Endothelial cell of umbilical vein (primary cell): ENCODE measurements at regions of chr10 and their contacts with region 1.

Region 1: GRCh38 chr10:29304264-29305030 is 15.6 kb downstream of the LYZL1 start:
- DNase-seq: peak; percentile 79
- H3K4me3 ChIP-seq: no peak overlapping the region
- H3K27ac ChIP-seq: no peak overlapping the region
- H3K4me1 ChIP-seq: no peaks in the 10 kb centered on the region
- H3K27me3 ChIP-seq: peaks cover 1 to 16% of the 10 kb centered on the region in 2 experiments
- CTCF ChIP-seq: peak; percentile 64 to 79
- POLR2A ChIP-seq: no peak

Region 2: GRCh38 chr10:28628184-28628893 is 676.1 kb before region 1 on chr10:
- CTCF ChIA-PET with region 1: interaction called, 130 read pairs
- POLR2A ChIA-PET with region 1: no interaction called
- dilution Hi-C with region 1: no loop called
- intact Hi-C with region 1: loop called (anchors 1 kb)
- DNase-seq: peak; percentile 69
- H3K4me3 ChIP-seq: no peak overlapping the region
- H3K27ac ChIP-seq: no peak overlapping the region
- H3K4me1 ChIP-seq: no peaks in the 10 kb centered on the region
- H3K27me3 ChIP-seq: peaks cover 7 to 10% of the 10 kb centered on the region in 2 experiments
- CTCF ChIP-seq: peak; percentile 89 to 91
- POLR2A ChIP-seq: no peak

Region 3: GRCh38 chr10:28991326-28992270 is 312.8 kb before region 1 on chr10:
- CTCF ChIA-PET with region 1: interaction called, 24 read pairs
- POLR2A ChIA-PET with region 1: no interaction called
- dilution Hi-C with region 1: no loop called
- intact Hi-C with region 1: loop called (anchors 5 kb)
- DNase-seq: peak; percentile 51
- H3K4me3 ChIP-seq: no peak overlapping the region
- H3K27ac ChIP-seq: no peak overlapping the region
- H3K4me1 ChIP-seq: no peaks in the 10 kb centered on the region
- H3K27me3 ChIP-seq: peaks cover 0 to 4% of the 10 kb centered on the region in 2 experiments
- CTCF ChIP-seq: peak; percentile 70 to 80
- POLR2A ChIP-seq: no peak

Region 4: DNA sequence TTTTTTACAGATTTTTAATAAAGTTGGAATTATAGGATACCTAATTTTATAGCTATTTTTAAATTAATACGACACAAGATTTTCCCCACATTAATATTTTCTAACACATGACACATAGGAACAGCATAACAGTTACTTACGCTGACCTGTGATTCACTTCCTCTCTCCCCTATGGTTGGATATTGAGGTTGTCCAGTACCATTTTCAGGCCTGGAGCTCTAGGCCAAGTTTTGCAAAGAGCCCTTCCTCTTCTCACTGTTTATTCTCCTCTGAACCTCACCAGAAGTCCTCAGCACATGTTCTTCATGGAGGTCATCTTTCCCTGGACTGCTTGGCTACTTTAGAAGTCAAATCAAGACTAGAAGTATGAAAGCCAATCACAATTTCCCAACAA is 12.6 kb after region 1 on chr10:
- CTCF ChIA-PET with region 1: interaction called, 19 read pairs
- POLR2A ChIA-PET with region 1: no interaction called
- dilution Hi-C with region 1: no loop called
- intact Hi-C with region 1: no loop called
- DNase-seq: peak; percentile 39
- H3K4me3 ChIP-seq: no peak overlapping the region
- H3K27ac ChIP-seq: peak overlapping the region; percentile 7
- H3K4me1 ChIP-seq: peaks cover 19% of the 10 kb centered on the region
- H3K27me3 ChIP-seq: no peaks in the 10 kb centered on the region
- CTCF ChIP-seq: no peak
- POLR2A ChIP-seq: no peak